Naive thymus-derived CD4-positive, alpha-beta T cell (primary cell): ENCODE measurements at regions of chr15 and their contacts with region 1.

Region 1: DNA sequence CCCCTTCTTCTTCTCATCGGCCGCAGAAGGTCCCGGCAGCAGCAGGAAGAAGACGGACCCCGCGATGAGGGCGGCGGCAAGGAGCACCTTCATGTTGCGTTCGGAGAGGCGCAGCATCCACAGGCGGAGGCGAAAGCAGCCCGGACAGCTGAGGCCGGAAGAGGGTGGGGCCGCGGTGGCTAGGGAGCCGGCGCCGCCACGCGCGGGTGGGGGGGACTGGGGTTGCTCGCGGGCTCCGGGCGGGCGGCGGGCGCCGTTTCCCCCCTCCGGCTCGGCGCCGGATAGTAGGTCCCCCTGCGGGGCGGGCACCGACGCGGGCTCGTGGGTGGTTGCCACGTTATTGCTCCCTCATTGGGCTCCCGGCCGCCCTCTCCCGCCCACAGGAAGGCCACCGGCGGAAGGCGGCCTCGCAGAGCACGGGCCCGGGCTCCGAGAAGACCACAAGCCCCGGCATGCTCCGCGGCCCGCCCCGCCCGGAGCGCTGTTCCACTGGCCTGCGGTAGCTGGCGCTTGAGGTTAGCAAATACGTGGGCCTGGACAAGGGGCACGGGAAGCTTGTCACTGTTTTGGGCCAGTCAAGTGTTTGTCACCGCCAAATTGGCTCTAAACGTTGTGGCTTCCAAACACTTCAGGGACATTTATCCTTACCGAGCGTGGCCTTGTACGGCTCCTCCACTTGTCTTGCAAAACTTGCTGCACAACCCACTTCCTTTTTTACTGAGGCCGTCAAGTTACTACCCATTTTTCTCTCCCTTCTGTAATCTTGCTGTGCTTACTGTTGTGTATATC is at the start of gene PPIB:
- DNase-seq: peak; percentile 89 to 98 (median 96)
- ATAC-seq: peak; percentile 97
- H3K4me3 ChIP-seq: peak within 1 kb of the TSS; percentile 76
- H3K4me3 Mint-ChIP-seq: peak within 1 kb of the TSS; percentile 80 to 97 (median 90)
- H3K27ac ChIP-seq: peak within 1 kb of the TSS; percentile 97
- H3K27ac Mint-ChIP-seq: peak within 1 kb of the TSS; percentile 83 to 97 (median 93)
- H3K4me1 ChIP-seq: peaks cover 17 to 29% of the 10 kb centered on the region in 2 donors
- H3K4me1 Mint-ChIP-seq: peaks cover 30 to 51% (median 46%) of the 10 kb centered on the region in 7 donors
- H3K27me3 ChIP-seq: no peaks in the 10 kb centered on the region
- H3K27me3 Mint-ChIP-seq: peaks cover 0 to 2% (median 0%) of the 10 kb centered on the region in 5 donors
- total RNA-seq, gene PPIB: 160 to 530 (median 184) TPM

Region 2: GRCh38 chr15:64381000-64381752 is 218.1 kb after region 1 on chr15 and contains the start of gene PCLAF:
- CTCF ChIA-PET with region 1: no interaction called
- POLR2A ChIA-PET with region 1: no interaction called
- intact Hi-C with region 1: loop called in 1 of 2 experiments (anchors 1 kb)
- DNase-seq: peak; percentile 72 to 91 (median 85)
- ATAC-seq: peak; percentile 100
- H3K4me3 ChIP-seq: peak within 1 kb of the TSS; percentile 66
- H3K4me3 Mint-ChIP-seq: peak within 1 kb of the TSS; percentile 79 to 97 (median 94)
- H3K27ac ChIP-seq: peak within 1 kb of the TSS; percentile 57
- H3K27ac Mint-ChIP-seq: peak within 1 kb of the TSS; percentile 11 to 88 (median 60)
- H3K4me1 ChIP-seq: peaks cover 0 to 4% of the 10 kb centered on the region in 2 donors
- H3K4me1 Mint-ChIP-seq: peaks cover 0 to 36% (median 9%) of the 10 kb centered on the region in 7 donors
- H3K27me3 ChIP-seq: no peaks in the 10 kb centered on the region
- H3K27me3 Mint-ChIP-seq: no peaks in the 10 kb centered on the region
- total RNA-seq, gene PCLAF: 0.85 to 58.7 (median 1.2) TPM

Region 3: GRCh38 chr15:64460206-64460734 is 297.2 kb after region 1 on chr15 and contains the start of gene ZNF609:
- CTCF ChIA-PET with region 1: no interaction called
- POLR2A ChIA-PET with region 1: no interaction called
- intact Hi-C with region 1: loop called in 1 of 2 experiments (anchors 1 kb)
- DNase-seq: peak; percentile 75 to 97 (median 85)
- ATAC-seq: peak; percentile 89
- H3K4me3 ChIP-seq: peak within 1 kb of the TSS; percentile 88
- H3K4me3 Mint-ChIP-seq: peak within 1 kb of the TSS; percentile 90 to 98 (median 94)
- H3K27ac ChIP-seq: peak within 1 kb of the TSS; percentile 70
- H3K27ac Mint-ChIP-seq: peak within 1 kb of the TSS; percentile 89 to 97 (median 92)
- H3K4me1 ChIP-seq: peaks cover 22 to 69% of the 10 kb centered on the region in 2 donors
- H3K4me1 Mint-ChIP-seq: peaks cover 61 to 91% (median 88%) of the 10 kb centered on the region in 7 donors
- H3K27me3 ChIP-seq: no peaks in the 10 kb centered on the region
- H3K27me3 Mint-ChIP-seq: no peaks in the 10 kb centered on the region
- total RNA-seq, gene ZNF609: 55.0 to 89.1 (median 78.3) TPM

Region 4: GRCh38 chr15:64702816-64703646 is 540.0 kb after region 1 on chr15:
- CTCF ChIA-PET with region 1: no interaction called
- POLR2A ChIA-PET with region 1: interaction called, 3 read pairs
- intact Hi-C with region 1: loop called (anchors 1 kb)
- DNase-seq: peak; percentile 87 to 98 (median 92)
- ATAC-seq: peak; percentile 98
- H3K4me3 ChIP-seq: peak overlapping the region; percentile 93
- H3K4me3 Mint-ChIP-seq: peak overlapping the region; percentile 78 to 97 (median 84)
- H3K27ac ChIP-seq: peak overlapping the region; percentile 80
- H3K27ac Mint-ChIP-seq: peak overlapping the region; percentile 67 to 95 (median 91)
- H3K4me1 ChIP-seq: peaks cover 40 to 43% of the 10 kb centered on the region in 2 donors
- H3K4me1 Mint-ChIP-seq: peaks cover 46 to 57% (median 52%) of the 10 kb centered on the region in 7 donors
- H3K27me3 ChIP-seq: no peaks in the 10 kb centered on the region
- H3K27me3 Mint-ChIP-seq: no peaks in the 10 kb centered on the region

Region 5: GRCh38 chr15:64989416-64990167 is 826.5 kb after region 1 on chr15 and contains the start of gene SPG21:
- CTCF ChIA-PET with region 1: no interaction called
- POLR2A ChIA-PET with region 1: no interaction called
- intact Hi-C with region 1: loop called (anchors 1 to 5 kb)
- DNase-seq: peak; percentile 77 to 97 (median 85)
- ATAC-seq: peak; percentile 95
- H3K4me3 ChIP-seq: peak within 1 kb of the TSS; percentile 83
- H3K4me3 Mint-ChIP-seq: peak within 1 kb of the TSS; percentile 93 to 99 (median 97)
- H3K27ac ChIP-seq: peak within 1 kb of the TSS; percentile 76
- H3K27ac Mint-ChIP-seq: peak within 1 kb of the TSS; percentile 91 to 98 (median 94)
- H3K4me1 ChIP-seq: peaks cover 0 to 19% of the 10 kb centered on the region in 2 donors
- H3K4me1 Mint-ChIP-seq: peaks cover 33 to 55% (median 48%) of the 10 kb centered on the region in 7 donors
- H3K27me3 ChIP-seq: no peaks in the 10 kb centered on the region
- H3K27me3 Mint-ChIP-seq: no peaks in the 10 kb centered on the region
- total RNA-seq, gene SPG21: 42.5 to 72.3 (median 60.0) TPM